Tibial artery (tissue), 4 donors: ENCODE measurements at regions of chr19 and their contacts with region 1.

Region 1: DNA sequence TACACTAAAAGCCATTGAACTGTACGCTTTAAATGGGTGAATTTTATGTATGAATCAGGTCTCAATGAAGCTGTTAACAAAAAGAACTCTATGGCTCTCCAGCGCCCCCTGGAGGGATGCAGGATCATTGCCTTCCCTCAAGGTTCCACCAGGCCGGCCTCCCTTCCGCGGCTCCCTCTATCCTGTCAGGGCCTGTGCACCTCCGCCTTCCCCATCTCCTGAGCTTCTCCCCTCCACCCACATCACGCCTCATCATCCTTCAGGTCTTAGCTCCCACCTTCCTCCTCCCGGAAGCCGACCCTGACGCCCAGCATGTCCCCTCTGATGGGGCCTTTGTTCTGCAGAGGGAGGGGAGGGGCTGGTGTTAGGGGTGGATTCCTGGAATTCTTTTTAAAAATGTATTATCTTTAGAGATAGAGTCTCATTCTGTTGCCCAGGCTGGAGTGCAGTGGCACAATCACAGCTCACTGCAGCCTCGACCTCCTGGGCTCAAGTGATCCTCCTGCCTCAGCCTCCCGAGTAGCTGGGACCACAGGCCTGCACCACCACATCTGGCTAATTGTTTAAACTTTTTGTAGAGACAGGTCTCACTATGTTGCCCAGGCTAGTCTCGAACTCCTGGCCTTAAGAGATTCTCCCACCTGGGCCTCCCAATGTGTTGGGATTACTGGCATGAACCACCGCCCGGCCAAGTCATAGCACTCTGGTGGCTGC is 27.7 kb downstream of the MEIS3 start:
- DNase-seq: peak; percentile 66 to 83
- H3K4me3 ChIP-seq: no peak overlapping the region
- H3K27ac ChIP-seq: no peak overlapping the region
- H3K4me1 ChIP-seq: peaks cover 0 to 9% (median 1%) of the 10 kb centered on the region in 4 donors
- H3K27me3 ChIP-seq: peaks cover 0 to 16% of the 10 kb centered on the region in 2 donors
- CTCF ChIP-seq: peak; percentile 86 to 89

Region 2: DNA sequence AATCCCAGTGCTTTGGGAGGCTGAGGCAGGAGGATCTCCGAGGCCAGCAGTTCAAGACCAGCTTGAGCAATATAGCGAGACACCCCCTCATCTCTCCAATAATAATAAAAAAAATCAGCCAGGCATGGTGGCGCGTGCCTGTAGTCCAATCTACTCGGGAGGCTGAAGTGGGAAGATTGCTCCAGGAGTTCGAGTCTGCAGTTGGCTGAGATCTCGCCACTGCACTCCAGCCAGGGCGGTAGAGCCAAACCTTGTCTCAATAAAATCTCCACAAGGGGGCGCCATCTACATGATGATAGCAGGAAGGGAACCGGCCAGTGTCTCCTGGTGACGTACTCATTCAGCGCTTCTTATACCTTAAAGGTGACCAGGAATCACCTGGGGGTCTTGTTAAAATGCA is 95.6 kb before region 1 on chr19:
- intact Hi-C with region 1: loop called (anchors 1 kb)
- DNase-seq: peak in 1 of 2 donors; percentile 81
- H3K4me3 ChIP-seq: no peak overlapping the region
- H3K27ac ChIP-seq: no peak overlapping the region
- H3K4me1 ChIP-seq: no peaks in the 10 kb centered on the region
- H3K27me3 ChIP-seq: no peaks in the 10 kb centered on the region
- CTCF ChIP-seq: peak; percentile 74 to 80

Region 3: GRCh38 chr19:47514869-47515588 is 123.4 kb after region 1 on chr19 and contains the start of gene NAPA:
- intact Hi-C with region 1: no loop called
- DNase-seq: peak; percentile 100
- H3K4me3 ChIP-seq: peak within 1 kb of the TSS; percentile 73 to 93
- H3K27ac ChIP-seq: peak within 1 kb of the TSS; percentile 86 to 97
- H3K4me1 ChIP-seq: peaks cover 14 to 48% (median 40%) of the 10 kb centered on the region in 4 donors
- H3K27me3 ChIP-seq: no peaks in the 10 kb centered on the region
- CTCF ChIP-seq: no peak

Region 4: DNA sequence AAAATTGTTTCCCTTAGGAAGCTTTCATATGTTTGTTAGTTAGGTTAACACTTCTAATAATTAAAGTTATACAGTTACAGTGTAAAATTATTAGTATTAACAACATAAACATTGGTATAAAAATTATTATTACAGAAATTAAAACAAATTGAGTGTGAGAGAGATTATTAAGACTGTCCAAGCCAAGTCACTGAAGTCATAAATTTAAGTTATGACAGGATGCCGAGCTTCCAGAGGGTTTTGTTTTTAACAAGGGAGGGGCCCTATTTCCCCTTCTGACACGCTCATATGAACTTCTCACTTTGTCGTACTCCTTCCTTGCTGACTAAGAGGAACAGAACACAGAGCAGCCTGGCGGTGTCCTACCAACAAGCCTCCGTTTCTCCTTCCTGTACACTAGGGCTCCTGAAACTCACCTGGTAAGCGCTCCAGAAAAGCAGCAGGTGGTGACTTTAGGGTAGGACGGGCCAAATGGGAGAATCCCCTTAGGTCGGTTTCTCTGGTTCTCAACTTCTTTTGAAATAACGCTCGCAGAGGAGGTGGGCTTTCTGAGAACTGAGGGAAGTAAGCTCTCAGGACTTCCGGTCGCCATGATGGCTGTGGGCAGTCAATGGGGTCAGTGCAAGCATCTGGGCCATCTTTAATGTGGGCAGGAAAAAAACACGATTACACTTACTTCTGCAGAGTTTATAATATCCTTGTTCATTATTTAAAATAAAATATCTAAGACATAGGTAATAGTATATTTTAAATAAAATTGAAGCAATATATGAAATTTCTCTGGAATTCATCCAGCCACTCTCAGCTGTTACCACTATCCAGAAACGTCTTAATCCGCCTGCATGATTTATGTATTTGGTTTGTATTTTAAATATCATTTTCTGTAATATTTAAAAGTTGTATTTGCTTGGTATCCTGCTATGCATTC is 864.0 kb after region 1 on chr19 and contains the start of gene CARD8:
- intact Hi-C with region 1: no loop called
- DNase-seq: peak; percentile 83 to 86
- H3K4me3 ChIP-seq: peak within 1 kb of the TSS; percentile 58 to 65
- H3K27ac ChIP-seq: peak within 1 kb of the TSS; percentile 86 to 87
- H3K4me1 ChIP-seq: peaks cover 0 to 17% (median 13%) of the 10 kb centered on the region in 4 donors
- H3K27me3 ChIP-seq: no peaks in the 10 kb centered on the region
- CTCF ChIP-seq: peak; percentile 7 to 31